ENCODE measurements at regions of chr7 and their contacts with region 1.

Region 1: GRCh38 chr7:25968205-25968993 is 183.6 kb upstream of the NFE2L3 start:
- DNase-seq: peak; percentile 98
- ATAC-seq: peak; percentile 75
- H3K4me3 ChIP-seq: peak overlapping the region; percentile 31; the same call in 1 of the 2 replicates
- H3K27ac ChIP-seq: peak overlapping the region; percentile 91
- H3K4me1 ChIP-seq: peaks cover 54% of the 10 kb centered on the region
- H3K27me3 ChIP-seq: no peaks in the 10 kb centered on the region
- CTCF ChIP-seq: peak; percentile 5 to 23 (median 10); a peak in 1 of 6 replicates
- EP300 ChIP-seq: peak; percentile 94 to 95
- POLR2A ChIP-seq: peak; percentile 54; the same call in 1 of the 2 replicates
- RAD21 ChIP-seq: 0 out of 2 replicates have a peak, but pooled peaks have one; percentile 19

Region 2: DNA sequence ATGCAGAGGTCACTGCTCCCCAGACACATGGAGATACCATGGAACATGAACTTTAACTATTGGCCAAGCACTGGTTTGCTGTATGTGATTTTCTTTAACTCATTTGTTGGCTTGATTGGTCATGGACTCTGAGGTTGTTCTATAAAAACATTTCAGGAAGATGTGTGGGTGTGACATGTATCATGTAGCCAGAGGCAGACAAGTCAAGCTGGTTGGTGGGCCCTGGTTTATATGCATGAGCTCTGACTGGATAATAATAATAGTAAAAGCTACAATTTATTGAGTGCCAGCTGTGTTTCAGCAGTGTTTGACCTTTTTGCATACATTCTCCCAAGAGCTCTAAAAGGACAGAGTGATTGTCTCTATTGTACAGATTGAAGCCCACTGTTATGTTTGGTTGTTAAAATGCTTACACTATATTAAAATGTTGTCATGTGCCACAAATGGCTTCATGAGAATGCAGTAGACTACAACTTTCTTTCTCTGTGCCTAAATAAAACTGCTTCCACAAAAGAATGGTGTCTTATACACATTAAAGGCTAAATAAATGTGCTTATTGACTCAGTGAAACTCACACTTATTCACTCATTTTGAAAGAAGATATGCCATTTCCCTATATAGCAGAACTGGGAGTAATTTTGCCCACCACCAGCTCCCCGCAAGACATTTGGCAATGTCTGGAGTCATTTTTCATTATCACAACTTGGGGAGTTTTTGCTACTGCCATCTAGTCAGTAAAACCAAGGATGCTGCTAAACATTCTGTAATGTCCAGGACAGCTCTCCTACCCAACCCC is 60.0 kb before region 1 on chr7:
- CTCF ChIA-PET with region 1: interaction called, 5 read pairs
- POLR2A ChIA-PET with region 1: interaction called, 4 read pairs
- RAD21 ChIA-PET with region 1: interaction called, 16 read pairs
- SMC1A ChIA-PET with region 1: interaction called, 10 read pairs
- in situ Hi-C with region 1: no loop called
- intact Hi-C with region 1: no loop called
- DNase-seq: no peak
- ATAC-seq: peak; percentile 73
- H3K4me3 ChIP-seq: no peak overlapping the region
- H3K27ac ChIP-seq: no peak overlapping the region
- H3K4me1 ChIP-seq: peaks cover 14% of the 10 kb centered on the region
- H3K27me3 ChIP-seq: no peaks in the 10 kb centered on the region
- CTCF ChIP-seq: no peak
- EP300 ChIP-seq: no peak
- POLR2A ChIP-seq: no peak
- RAD21 ChIP-seq: no peak

Region 3: DNA sequence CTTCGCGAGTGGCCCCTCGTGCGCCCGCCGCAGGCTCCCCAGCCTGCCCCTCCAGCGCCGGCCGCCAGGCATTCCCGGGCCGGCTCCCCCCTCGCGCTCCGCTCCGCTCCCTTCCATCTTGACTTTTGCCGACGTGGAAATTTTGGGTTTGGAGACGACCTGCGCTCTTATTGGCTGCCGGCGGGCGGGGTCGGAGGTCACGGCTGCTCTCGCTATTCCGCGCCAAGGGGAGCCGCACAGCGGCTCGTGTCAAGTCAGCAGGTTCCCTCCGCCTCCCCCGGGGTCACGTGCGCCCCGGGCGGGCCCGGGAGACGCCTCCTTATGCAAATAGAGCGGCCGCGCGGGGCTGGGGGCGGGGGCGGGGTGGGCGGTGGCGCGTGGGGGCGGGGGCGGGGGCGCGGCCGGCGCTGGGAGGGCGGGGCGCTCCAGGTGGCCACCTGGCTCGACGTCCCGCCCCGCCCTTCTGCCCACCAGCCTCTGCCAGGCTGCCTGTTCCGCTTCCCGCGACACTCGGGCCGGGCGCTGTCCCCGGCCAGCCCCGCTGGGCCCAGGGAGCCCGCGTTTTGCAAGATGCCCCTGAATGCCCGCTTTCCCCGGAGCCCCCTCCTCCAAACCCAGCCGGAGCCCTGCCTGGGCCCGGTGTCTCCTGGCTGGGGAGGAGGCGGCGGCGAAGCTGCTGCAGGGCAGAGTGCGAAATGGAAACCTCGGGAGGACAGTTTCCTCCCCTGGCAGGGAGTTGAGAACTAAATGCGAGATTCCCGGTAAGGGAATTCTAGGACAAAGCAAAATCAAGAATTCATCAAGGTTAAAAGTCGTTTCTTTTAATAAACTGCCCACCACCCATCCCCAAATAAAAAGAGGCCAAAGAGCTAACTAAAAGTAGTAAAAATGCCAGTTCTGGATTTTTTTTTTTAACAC is 17.1 kb before region 1 on chr7:
- CTCF ChIA-PET with region 1: interaction called, 13 read pairs
- POLR2A ChIA-PET with region 1: interaction called, 23 read pairs
- RAD21 ChIA-PET with region 1: interaction called, 9 read pairs
- SMC1A ChIA-PET with region 1: interaction called, 15 read pairs
- in situ Hi-C with region 1: no loop called
- intact Hi-C with region 1: loop called (anchors 1 kb)
- DNase-seq: peak; percentile 69
- ATAC-seq: peak; percentile 89
- H3K4me3 ChIP-seq: peak overlapping the region; percentile 86
- H3K27ac ChIP-seq: peak overlapping the region; percentile 49
- H3K4me1 ChIP-seq: peaks cover 23% of the 10 kb centered on the region
- H3K27me3 ChIP-seq: no peaks in the 10 kb centered on the region
- CTCF ChIP-seq: no peak
- EP300 ChIP-seq: no peak
- POLR2A ChIP-seq: peak; percentile 68
- RAD21 ChIP-seq: no peak

Region 4: GRCh38 chr7:26061688-26062150 is 93.3 kb after region 1 on chr7:
- CTCF ChIA-PET with region 1: interaction called, 6 read pairs
- POLR2A ChIA-PET with region 1: interaction called, 3 read pairs
- RAD21 ChIA-PET with region 1: interaction called, 4 read pairs
- SMC1A ChIA-PET with region 1: interaction called, 3 read pairs
- in situ Hi-C with region 1: no loop called
- intact Hi-C with region 1: loop called (anchors 2 kb)
- DNase-seq: peak; percentile 37
- ATAC-seq: peak; percentile 98
- H3K4me3 ChIP-seq: no peak overlapping the region
- H3K27ac ChIP-seq: no peak overlapping the region
- H3K4me1 ChIP-seq: no peaks in the 10 kb centered on the region
- H3K27me3 ChIP-seq: no peaks in the 10 kb centered on the region; a peak in 1 of 4 replicates
- CTCF ChIP-seq: peak; percentile 86 to 87 (median 87)
- EP300 ChIP-seq: no peak
- POLR2A ChIP-seq: no peak
- RAD21 ChIP-seq: peak; percentile 90